IMR-90 (cell line): ENCODE measurements at regions of chr6 and their contacts with region 1.

Region 1: DNA sequence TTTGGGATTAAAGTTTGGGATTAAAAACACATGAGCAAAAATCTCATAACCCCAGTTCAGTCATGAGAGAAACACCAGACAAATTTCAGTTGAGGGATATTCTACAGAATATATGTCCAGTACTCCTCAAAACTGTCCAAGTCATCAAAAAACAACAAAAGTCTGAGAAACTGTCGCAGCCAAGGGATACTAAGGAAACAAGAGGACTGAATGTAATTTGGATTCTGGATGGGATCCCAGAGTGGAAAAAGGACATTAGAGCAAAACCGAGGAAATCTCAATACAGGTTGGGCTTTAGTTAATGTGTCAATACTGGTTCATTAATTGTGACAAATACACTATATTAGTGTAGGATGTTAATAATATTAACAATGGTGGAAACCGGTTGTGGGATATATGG is 219.3 kb downstream of the BCKDHB start:
- DNase-seq: no peak
- ATAC-seq: no peak
- H3K4me3 ChIP-seq: no peak overlapping the region
- H3K27ac ChIP-seq: no peak overlapping the region
- H3K4me1 ChIP-seq: peaks cover 3% of the 10 kb centered on the region; the same call in 1 of the 2 replicates
- H3K27me3 ChIP-seq: no peaks in the 10 kb centered on the region
- CTCF ChIP-seq: no peak
- POLR2A ChIP-seq: no peak
- RAD21 ChIP-seq: no peak

Region 2: DNA sequence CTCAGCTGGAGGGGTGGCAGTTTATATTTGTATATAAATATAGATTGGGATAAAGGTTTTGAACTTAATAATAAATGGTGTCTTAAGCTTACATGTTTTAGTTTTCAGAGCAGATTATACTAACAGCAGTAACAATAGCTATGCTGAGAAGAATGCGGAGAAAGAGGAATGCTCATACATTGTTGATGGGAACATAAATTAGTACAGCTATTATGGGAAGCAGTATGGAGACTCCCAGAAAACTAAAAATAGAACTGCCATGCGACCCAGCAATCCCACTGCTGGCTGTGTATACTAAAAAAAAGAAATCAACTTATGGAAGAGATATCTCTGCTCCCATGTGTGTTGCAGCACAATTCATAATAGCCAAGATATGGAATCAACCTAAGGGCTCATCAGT is 91.3 kb before region 1 on chr6:
- CTCF ChIA-PET with region 1: no interaction called
- POLR2A ChIA-PET with region 1: no interaction called
- dilution Hi-C with region 1: no loop called
- in situ Hi-C with region 1: no loop called
- intact Hi-C with region 1: loop called (anchors 10 kb)
- DNase-seq: peak; percentile 7
- ATAC-seq: no peak
- H3K4me3 ChIP-seq: no peak overlapping the region
- H3K27ac ChIP-seq: no peak overlapping the region
- H3K4me1 ChIP-seq: no peaks in the 10 kb centered on the region; the same call in 1 of the 2 replicates
- H3K27me3 ChIP-seq: no peaks in the 10 kb centered on the region
- CTCF ChIP-seq: no peak
- POLR2A ChIP-seq: no peak
- RAD21 ChIP-seq: no peak